ENCODE measurements at regions of chr7 and their contacts with region 1.

Region 1: GRCh38 chr7:537911-538634 is 18.4 kb upstream of the PDGFA start:
- DNase-seq: peak; percentile 91
- H3K4me3 Mint-ChIP-seq: peak overlapping the region; percentile 66
- H3K27ac Mint-ChIP-seq: peak overlapping the region; percentile 85
- H3K4me1 Mint-ChIP-seq: peaks cover 36% of the 10 kb centered on the region
- H3K27me3 Mint-ChIP-seq: no peaks in the 10 kb centered on the region
- CTCF ChIP-seq: no peak

Region 2: GRCh38 chr7:525740-526139 is 12.3 kb before region 1 on chr7:
- CTCF ChIA-PET with region 1: interaction called, 3 read pairs
- POLR2A ChIA-PET with region 1: interaction called, 27 read pairs
- intact Hi-C with region 1: no loop called
- DNase-seq: peak; percentile 73
- H3K4me3 Mint-ChIP-seq: no peak overlapping the region
- H3K27ac Mint-ChIP-seq: no peak overlapping the region
- H3K4me1 Mint-ChIP-seq: no peaks in the 10 kb centered on the region
- H3K27me3 Mint-ChIP-seq: no peaks in the 10 kb centered on the region
- CTCF ChIP-seq: no peak

Region 3: DNA sequence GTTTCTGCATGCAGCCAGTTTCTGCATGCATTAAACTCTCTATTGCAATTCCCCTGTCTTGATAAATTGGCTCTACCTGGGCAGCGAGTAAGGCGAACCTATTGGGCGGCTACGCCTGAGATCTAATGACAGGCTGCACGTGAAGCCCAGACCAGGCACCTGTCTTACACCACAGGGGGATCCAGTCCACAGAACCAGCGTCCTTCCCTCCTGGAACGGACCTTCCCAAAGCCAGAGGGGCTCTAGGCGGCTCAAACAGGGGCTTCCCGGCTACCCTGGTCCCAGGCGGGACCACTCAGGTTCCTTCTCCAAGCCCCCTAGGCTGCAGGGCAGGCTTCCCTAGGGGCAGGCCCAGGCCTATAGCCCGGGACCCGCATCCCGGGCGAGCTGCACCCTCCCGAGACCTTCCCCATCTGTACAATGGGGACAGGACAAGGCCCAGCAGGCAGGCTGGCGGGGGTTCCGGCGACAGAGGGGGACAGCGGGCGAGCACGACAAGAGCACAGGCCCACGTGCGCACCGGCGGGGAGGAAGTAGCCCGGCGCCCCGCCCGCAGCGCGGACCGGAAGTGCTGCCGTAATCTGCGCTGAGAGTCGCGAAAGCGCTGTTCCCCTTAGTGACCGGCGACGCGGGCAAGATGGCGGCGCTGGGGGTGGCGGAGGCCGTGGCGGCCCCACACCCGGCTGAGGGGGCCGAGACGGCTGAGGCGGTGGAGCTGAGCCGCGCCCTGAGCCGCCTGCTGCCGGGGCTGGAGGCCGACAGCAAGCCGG is 188.2 kb after region 1 on chr7 and contains the start of gene DNAAF5:
- CTCF ChIA-PET with region 1: interaction called, 3 read pairs
- POLR2A ChIA-PET with region 1: no interaction called
- intact Hi-C with region 1: loop called (anchors 5 kb)
- DNase-seq: peak; percentile 85
- H3K4me3 Mint-ChIP-seq: peak within 1 kb of the TSS; percentile 78
- H3K27ac Mint-ChIP-seq: peak within 1 kb of the TSS; percentile 75
- H3K4me1 Mint-ChIP-seq: peaks cover 31% of the 10 kb centered on the region
- H3K27me3 Mint-ChIP-seq: no peaks in the 10 kb centered on the region
- CTCF ChIP-seq: no peak
- total RNA-seq, gene DNAAF5: 35.6 and 37.6 TPM in 2 replicates

Measured in MCF 10A (cell line).